Activated CD4-positive, alpha-beta T cell treated with anti-CD3 and anti-CD28 coated beads, Interleukin-2, amount 10 ng/mL, durations not matched to agents 7 days and 5 days (primary cell): ENCODE measurements at regions of chr3 and their contacts with region 1.

Region 1: GRCh38 chr3:112293368-112294321 is at the start of gene SLC9C1:
- DNase-seq: peak; percentile 74
- H3K4me3 Mint-ChIP-seq: peak within 1 kb of the TSS; percentile 57
- H3K27ac Mint-ChIP-seq: peak within 1 kb of the TSS; percentile 77
- H3K4me1 Mint-ChIP-seq: peaks cover 37% of the 10 kb centered on the region
- H3K27me3 Mint-ChIP-seq: no peaks in the 10 kb centered on the region
- total RNA-seq, gene SLC9C1: not detected

Region 2: DNA sequence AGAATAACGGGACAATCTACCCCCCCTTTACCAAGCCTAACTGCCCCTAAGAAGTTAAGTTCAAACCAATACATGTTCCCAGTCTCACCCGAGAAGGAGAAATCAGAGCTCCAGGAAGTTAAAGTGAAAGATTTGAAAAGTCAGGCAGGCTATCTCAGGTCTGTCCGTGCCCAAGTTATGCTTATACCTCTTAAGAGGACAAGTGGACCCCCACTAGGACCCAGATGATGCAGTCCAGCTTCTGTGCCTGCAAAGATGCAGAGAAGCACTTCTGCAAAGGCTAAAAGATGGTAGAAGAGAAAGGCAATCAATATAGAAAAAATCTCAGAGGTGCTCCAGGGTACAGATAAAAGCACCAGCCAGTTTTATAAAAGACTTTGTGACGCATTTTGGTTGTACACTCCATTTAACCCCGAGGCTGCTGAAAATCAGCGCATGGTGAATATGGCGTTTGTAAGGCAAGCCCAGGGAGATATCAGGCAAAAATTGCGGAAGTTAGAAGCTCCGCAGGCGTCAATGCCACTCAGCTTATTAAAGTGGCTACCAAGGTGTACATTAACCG is 10.2 kb after region 1 on chr3:
- CTCF ChIA-PET with region 1: interaction called, 20 read pairs
- POLR2A ChIA-PET with region 1: no interaction called
- DNase-seq: peak; percentile 15
- H3K4me3 Mint-ChIP-seq: no peak overlapping the region
- H3K27ac Mint-ChIP-seq: no peak overlapping the region
- H3K4me1 Mint-ChIP-seq: peaks cover 3% of the 10 kb centered on the region
- H3K27me3 Mint-ChIP-seq: no peaks in the 10 kb centered on the region

Region 3: GRCh38 chr3:112531358-112531781 is 237.7 kb after region 1 on chr3:
- CTCF ChIA-PET with region 1: interaction called, 7 read pairs
- POLR2A ChIA-PET with region 1: interaction called, 10 read pairs
- DNase-seq: no peak
- H3K4me3 Mint-ChIP-seq: no peak overlapping the region
- H3K27ac Mint-ChIP-seq: no peak overlapping the region
- H3K4me1 Mint-ChIP-seq: no peaks in the 10 kb centered on the region
- H3K27me3 Mint-ChIP-seq: no peaks in the 10 kb centered on the region